Head of caudate nucleus (tissue), 42 donors: ENCODE measurements at regions of chr2 and their contacts with region 1.

Region 1: DNA sequence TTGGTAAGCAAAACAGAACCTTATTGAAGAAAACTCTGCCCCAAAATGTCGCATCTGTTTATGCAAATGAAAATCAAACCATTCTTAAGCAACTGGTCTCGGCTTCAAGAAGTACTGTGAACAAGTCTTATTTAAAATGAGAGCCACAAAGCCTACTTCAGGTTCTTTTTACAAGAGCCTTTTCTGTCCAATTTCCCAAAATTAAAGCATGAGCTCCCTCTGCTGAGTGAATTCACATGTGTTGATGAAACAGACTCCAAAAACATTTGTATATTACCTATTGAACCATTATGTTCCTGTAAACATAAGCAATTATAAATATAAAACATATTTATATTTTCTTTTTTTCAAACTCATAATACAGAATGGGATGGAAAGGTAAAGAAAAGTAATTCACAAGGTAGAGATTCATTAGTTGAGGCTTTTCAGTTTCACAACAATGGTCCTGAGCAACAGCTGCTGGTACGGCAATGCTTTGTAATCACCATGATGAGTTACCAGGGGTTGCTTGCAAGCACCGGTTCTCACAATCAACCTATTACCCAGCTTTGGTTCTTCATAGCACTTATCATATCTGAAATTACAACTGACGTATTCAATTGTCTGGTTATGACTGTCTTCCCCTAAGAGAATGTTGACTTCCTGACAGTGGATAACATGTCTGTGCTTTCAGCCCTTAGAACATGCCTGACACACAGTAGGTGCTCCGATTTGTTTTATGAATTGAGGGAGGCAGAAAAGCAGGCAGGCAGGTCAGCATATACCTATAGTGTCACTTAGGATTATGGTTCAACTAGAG is 108.4 kb upstream of the BZW1 start:
- DNase-seq: peak in 17 of 42 donors; percentile 17 to 81 (median 51)

Region 2: GRCh38 chr2:199962203-199962602 is 741.1 kb before region 1 on chr2:
- intact Hi-C with region 1: loop called (anchors 10 kb)
- DNase-seq: no peak

Region 3: GRCh38 chr2:200618587-200619021 is 84.7 kb before region 1 on chr2:
- intact Hi-C with region 1: loop called (anchors 10 kb)
- DNase-seq: peak in 34 of 42 donors; percentile 3 to 77 (median 44)